Esophagus muscularis mucosa (tissue), 4 donors: ENCODE measurements at regions of chr2 and their contacts with region 1.

Region 1: GRCh38 chr2:65576861-65577601 is 144.6 kb upstream of the SPRED2 start:
- DNase-seq: no peak
- H3K4me3 ChIP-seq: no peak overlapping the region
- H3K27ac ChIP-seq: no peak overlapping the region
- H3K4me1 ChIP-seq: peaks cover 0 to 8% (median 1%) of the 10 kb centered on the region in 4 donors
- H3K27me3 ChIP-seq: no peaks in the 10 kb centered on the region
- CTCF ChIP-seq: no peak
- EP300 ChIP-seq: no peak
- POLR2A ChIP-seq: no peak

Region 2: GRCh38 chr2:65264821-65265670 is 312.0 kb before region 1 on chr2:
- intact Hi-C with region 1: loop called (anchors 5 kb)
- DNase-seq: no peak
- H3K4me3 ChIP-seq: no peak overlapping the region
- H3K27ac ChIP-seq: no peak overlapping the region
- H3K4me1 ChIP-seq: peaks cover 0 to 9% (median 4%) of the 10 kb centered on the region in 4 donors
- H3K27me3 ChIP-seq: no peaks in the 10 kb centered on the region
- CTCF ChIP-seq: peak; percentile 63 to 73 (median 65)
- EP300 ChIP-seq: no peak
- POLR2A ChIP-seq: no peak